ENCODE measurements at regions of chr19 and their contacts with region 1.

Region 1: DNA sequence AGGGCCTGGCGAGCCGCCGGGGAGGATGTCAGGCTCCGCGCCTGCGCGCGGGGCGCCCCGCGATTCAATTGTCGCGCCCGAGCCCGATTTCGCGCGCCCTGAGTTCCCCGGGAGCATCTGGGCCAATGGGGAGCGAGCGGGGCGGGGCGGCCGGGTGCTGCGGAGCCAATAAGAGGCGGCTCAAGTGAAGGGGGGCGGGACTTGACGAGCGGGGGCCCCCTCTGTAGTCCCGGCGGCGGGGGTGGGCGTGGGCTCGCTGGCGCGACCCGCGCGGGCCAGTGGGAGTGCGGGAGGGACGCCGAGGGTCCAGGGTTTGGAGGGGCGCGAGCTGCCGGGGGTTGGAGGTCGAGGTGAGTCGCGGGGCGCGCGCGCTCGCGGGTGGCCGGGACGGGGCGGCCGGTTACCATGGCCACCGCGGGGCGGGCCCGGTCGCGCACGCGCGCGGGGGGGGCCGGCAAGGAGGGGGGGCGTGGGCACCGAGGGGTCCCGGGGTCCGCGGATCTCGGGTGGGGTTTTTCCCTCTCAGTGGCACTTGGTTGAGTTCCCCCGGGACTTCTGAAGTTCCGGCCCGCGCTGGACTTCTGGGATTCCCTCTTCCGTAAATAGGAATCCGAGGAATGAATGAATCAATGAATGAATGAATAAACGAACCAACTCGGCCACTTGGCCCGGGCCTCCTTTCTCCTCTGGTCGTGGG is 744 bp downstream of the UHRF1 start:
- DNase-seq: peak; percentile 90
- H3K4me3 Mint-ChIP-seq: peak overlapping the region; percentile 66
- H3K27ac Mint-ChIP-seq: peak overlapping the region; percentile 66
- H3K4me1 Mint-ChIP-seq: peaks cover 33% of the 10 kb centered on the region
- H3K27me3 Mint-ChIP-seq: no peaks in the 10 kb centered on the region
- CTCF ChIP-seq: no peak

Region 2: DNA sequence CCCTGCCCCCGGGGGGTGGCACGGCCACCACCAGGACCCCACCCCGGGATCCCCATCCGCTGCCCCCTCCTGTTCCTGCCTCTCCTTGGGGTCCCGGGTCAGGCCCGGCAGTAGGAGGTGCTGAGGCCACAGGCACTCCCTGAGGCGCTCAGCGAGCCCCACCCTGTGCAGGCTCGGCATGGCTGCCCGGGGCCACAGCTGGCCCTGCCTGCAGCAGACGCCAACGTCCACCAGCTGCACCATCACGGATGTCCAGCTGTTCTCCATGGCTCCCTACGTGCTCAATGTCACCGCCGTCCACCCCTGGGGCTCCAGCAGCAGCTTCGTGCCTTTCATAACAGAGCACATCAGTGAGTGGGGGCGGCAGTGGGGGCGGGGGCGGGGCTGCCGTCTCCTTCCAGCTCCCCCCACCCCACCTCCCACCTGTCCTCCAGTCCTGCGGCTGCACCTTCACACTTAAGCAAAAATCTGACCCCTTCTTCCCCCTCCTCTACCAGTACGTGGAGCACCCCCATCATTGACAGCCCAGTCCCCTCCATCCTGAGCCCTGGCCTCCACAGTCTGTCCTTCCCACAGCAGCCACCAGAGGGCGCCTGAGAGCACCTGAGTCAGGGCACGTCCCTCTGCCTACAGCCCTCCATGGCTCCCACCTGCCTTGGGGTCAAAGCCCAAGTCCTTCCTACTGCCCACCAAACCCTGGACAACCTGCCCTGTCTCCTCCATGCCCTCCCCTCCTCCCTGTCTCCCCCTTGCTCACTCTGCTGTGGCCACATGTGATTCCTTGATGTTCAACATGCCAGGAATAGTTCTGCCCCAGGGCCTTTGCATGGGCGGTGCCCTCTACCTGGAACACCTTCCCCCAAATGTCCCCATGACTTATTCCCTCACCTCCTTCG is 676.8 kb before region 1 on chr19:
- CTCF ChIA-PET with region 1: no interaction called
- intact Hi-C with region 1: no loop called
- DNase-seq: peak; percentile 69
- H3K4me3 Mint-ChIP-seq: peak overlapping the region; percentile 39
- H3K27ac Mint-ChIP-seq: no peak overlapping the region
- H3K4me1 Mint-ChIP-seq: no peaks in the 10 kb centered on the region
- H3K27me3 Mint-ChIP-seq: no peaks in the 10 kb centered on the region
- CTCF ChIP-seq: peak; percentile 59

Region 3: GRCh38 chr19:4803736-4804695 is 106.0 kb before region 1 on chr19:
- CTCF ChIA-PET with region 1: interaction called, 30 read pairs
- intact Hi-C with region 1: loop called (anchors 5 kb)
- DNase-seq: peak; percentile 77
- H3K4me3 Mint-ChIP-seq: no peak overlapping the region
- H3K27ac Mint-ChIP-seq: no peak overlapping the region
- H3K4me1 Mint-ChIP-seq: no peaks in the 10 kb centered on the region
- H3K27me3 Mint-ChIP-seq: no peaks in the 10 kb centered on the region
- CTCF ChIP-seq: peak; percentile 75

Region 4: GRCh38 chr19:4815426-4816201 is 94.4 kb before region 1 on chr19:
- CTCF ChIA-PET with region 1: interaction called, 30 read pairs
- intact Hi-C with region 1: no loop called
- DNase-seq: peak; percentile 83
- H3K4me3 Mint-ChIP-seq: peak overlapping the region; percentile 63
- H3K27ac Mint-ChIP-seq: peak overlapping the region; percentile 81
- H3K4me1 Mint-ChIP-seq: peaks cover 30% of the 10 kb centered on the region
- H3K27me3 Mint-ChIP-seq: no peaks in the 10 kb centered on the region
- CTCF ChIP-seq: no peak

Region 5: GRCh38 chr19:4831304-4831978 is 78.6 kb before region 1 on chr19 and contains the start of gene TICAM1:
- CTCF ChIA-PET with region 1: no interaction called
- intact Hi-C with region 1: no loop called
- DNase-seq: peak; percentile 60
- H3K4me3 Mint-ChIP-seq: peak within 1 kb of the TSS; percentile 80
- H3K27ac Mint-ChIP-seq: peak within 1 kb of the TSS; percentile 85
- H3K4me1 Mint-ChIP-seq: peaks cover 9% of the 10 kb centered on the region
- H3K27me3 Mint-ChIP-seq: no peaks in the 10 kb centered on the region
- CTCF ChIP-seq: no peak
- total RNA-seq, gene TICAM1: 13.5 and 15.8 TPM in 2 replicates

Region 6: DNA sequence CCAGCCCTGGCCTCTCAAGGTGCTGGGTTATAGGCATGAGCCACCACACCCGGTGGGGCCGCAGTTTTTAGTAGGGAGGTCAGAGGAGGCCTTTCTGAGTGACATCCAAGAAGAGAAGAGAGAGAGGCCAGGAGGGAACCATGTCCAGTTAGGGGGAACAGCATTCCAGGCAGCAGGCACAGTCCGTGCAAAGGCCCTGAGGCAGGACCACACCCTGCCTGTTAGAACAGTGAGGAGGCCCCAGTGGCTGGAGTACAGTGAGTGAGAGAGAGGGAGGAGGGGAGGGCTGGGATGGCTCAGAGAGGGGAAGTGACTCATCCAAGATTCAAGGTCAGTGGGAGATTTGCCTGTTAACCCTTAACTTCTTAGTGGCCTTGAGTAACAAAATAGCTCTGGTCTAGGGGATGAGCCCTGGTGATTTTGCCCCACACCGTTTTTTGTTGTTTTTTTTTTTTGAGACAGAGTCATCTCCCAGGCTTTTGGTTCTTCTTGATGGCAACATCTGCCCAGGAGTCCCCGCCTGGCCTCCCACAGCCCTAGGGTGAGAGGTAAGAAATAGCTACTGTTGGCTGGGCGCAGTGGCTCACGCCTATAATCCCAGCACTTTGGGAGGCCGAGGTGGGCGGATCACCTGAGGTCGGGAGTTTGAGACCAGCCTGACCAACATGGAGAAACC is 39.9 kb before region 1 on chr19:
- CTCF ChIA-PET with region 1: interaction called, 13 read pairs
- intact Hi-C with region 1: loop called (anchors 1 kb)
- DNase-seq: peak; percentile 55
- H3K4me3 Mint-ChIP-seq: peak overlapping the region; percentile 24
- H3K27ac Mint-ChIP-seq: peak overlapping the region; percentile 93
- H3K4me1 Mint-ChIP-seq: peaks cover 12% of the 10 kb centered on the region
- H3K27me3 Mint-ChIP-seq: no peaks in the 10 kb centered on the region
- CTCF ChIP-seq: no peak

Region 7: DNA sequence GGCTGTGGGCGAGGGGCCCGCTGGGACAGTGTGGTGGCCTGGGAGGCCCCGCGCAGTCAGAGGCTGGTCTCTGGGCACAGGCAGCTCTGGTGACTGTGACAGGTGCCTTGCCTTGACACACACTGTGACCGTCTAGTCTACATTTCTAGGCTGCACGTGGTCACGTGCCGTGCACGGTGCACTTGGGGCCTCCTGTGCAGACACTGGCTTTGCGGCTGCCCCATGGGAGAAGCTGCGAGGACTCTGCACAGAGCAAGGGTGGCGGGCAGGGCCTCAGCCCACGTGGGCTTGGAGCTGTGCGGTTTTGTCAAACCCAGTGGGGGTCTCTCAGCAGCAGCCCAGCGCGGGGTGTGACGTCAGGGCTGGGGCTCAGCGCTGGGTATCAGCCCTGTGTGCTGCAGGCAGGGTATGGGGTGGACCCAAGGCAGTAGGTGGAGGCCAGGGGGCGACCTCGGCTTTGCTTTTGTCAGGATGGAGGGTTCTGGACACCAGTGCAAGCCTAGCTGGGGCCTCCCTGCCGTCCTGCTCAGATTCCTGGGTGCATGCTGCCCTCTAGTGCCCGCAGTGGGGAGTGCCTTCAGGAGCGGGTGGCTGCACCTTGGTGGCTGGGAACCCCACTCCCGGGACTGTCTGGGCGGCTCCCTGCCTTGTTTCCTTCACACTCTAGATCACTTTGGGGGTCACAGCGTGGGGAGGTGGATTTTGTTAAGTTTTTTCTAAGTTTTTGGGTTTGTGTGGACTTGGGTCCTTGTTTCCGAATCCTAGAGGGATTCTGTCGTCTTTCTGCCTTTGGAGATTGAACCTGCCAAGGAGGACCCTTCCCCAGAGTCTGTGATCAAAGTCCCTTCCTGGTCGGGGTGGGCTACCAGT is 121.4 kb after region 1 on chr19:
- CTCF ChIA-PET with region 1: interaction called, 11 read pairs
- intact Hi-C with region 1: no loop called
- DNase-seq: peak; percentile 88
- H3K4me3 Mint-ChIP-seq: no peak overlapping the region
- H3K27ac Mint-ChIP-seq: no peak overlapping the region
- H3K4me1 Mint-ChIP-seq: no peaks in the 10 kb centered on the region
- H3K27me3 Mint-ChIP-seq: no peaks in the 10 kb centered on the region
- CTCF ChIP-seq: peak; percentile 73